ENCODE measurements at regions of chr21 and their contacts with region 1.

Region 1: GRCh38 chr21:38355992-38356797 is 99.4 kb downstream of the KCNJ15 start:
- DNase-seq: peak; percentile 88
- ATAC-seq: peak; percentile 78
- H3K4me3 Mint-ChIP-seq: no peak overlapping the region
- H3K27ac Mint-ChIP-seq: no peak overlapping the region
- H3K4me1 Mint-ChIP-seq: peaks cover 13% of the 10 kb centered on the region
- H3K27me3 Mint-ChIP-seq: peaks cover 5% of the 10 kb centered on the region

Region 2: GRCh38 chr21:37675202-37675801 is 680.9 kb before region 1 on chr21:
- CTCF ChIA-PET with region 1: interaction called, 4 read pairs
- POLR2A ChIA-PET with region 1: no interaction called
- intact Hi-C with region 1: loop called in 1 of 2 experiments (anchors 10 kb)
- DNase-seq: peak; percentile 81
- ATAC-seq: peak; percentile 74
- H3K4me3 Mint-ChIP-seq: no peak overlapping the region
- H3K27ac Mint-ChIP-seq: no peak overlapping the region
- H3K4me1 Mint-ChIP-seq: no peaks in the 10 kb centered on the region
- H3K27me3 Mint-ChIP-seq: peaks cover 18% of the 10 kb centered on the region

Region 3: DNA sequence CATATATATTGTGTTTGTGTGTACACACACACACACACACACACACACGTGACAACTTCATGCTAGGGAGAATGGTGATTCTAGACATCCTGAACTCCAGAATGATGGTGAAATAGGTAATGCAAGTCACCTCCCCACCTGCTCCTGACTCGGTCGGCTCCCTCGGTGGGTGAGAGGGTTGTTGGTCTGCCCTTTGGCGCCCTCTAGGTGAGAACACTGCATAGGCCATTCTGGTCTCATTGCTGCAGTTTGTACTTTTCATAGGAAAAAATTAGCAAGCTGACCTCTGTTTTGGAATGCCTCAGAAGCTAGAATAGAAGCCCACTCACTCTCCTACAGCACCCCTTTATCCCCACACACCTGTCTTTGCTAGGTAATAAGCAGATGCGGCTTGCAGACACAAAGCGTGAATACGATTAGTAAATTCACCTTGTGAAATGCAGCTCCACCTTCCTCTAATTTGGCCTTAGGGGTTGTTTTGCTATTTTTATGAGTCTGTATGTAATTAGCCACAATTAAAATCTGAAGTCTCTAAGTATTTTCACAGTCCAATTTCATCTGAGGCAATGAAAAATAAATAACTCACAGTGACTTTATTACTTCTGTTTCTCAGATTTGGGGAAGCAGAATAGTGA is 229.4 kb before region 1 on chr21:
- CTCF ChIA-PET with region 1: interaction called, 10 read pairs
- POLR2A ChIA-PET with region 1: no interaction called
- intact Hi-C with region 1: no loop called
- DNase-seq: peak; percentile 80
- ATAC-seq: peak; percentile 76
- H3K4me3 Mint-ChIP-seq: no peak overlapping the region
- H3K27ac Mint-ChIP-seq: no peak overlapping the region
- H3K4me1 Mint-ChIP-seq: no peaks in the 10 kb centered on the region
- H3K27me3 Mint-ChIP-seq: peaks cover 11% of the 10 kb centered on the region

Region 4: GRCh38 chr21:38170280-38170679 is 185.9 kb before region 1 on chr21:
- CTCF ChIA-PET with region 1: interaction called, 81 read pairs
- POLR2A ChIA-PET with region 1: no interaction called
- intact Hi-C with region 1: no loop called
- DNase-seq: peak; percentile 37
- ATAC-seq: no peak
- H3K4me3 Mint-ChIP-seq: no peak overlapping the region
- H3K27ac Mint-ChIP-seq: no peak overlapping the region
- H3K4me1 Mint-ChIP-seq: no peaks in the 10 kb centered on the region
- H3K27me3 Mint-ChIP-seq: no peaks in the 10 kb centered on the region

Region 5: GRCh38 chr21:38212706-38213105 is 143.5 kb before region 1 on chr21:
- CTCF ChIA-PET with region 1: interaction called, 154 read pairs
- POLR2A ChIA-PET with region 1: no interaction called
- intact Hi-C with region 1: no loop called
- DNase-seq: no peak
- ATAC-seq: no peak
- H3K4me3 Mint-ChIP-seq: no peak overlapping the region
- H3K27ac Mint-ChIP-seq: no peak overlapping the region
- H3K4me1 Mint-ChIP-seq: peaks cover 3% of the 10 kb centered on the region
- H3K27me3 Mint-ChIP-seq: peaks cover 26% of the 10 kb centered on the region

Region 6: GRCh38 chr21:38236232-38236631 is 120.0 kb before region 1 on chr21:
- CTCF ChIA-PET with region 1: interaction called, 18 read pairs
- POLR2A ChIA-PET with region 1: no interaction called
- intact Hi-C with region 1: no loop called
- DNase-seq: no peak
- ATAC-seq: no peak
- H3K4me3 Mint-ChIP-seq: no peak overlapping the region
- H3K27ac Mint-ChIP-seq: no peak overlapping the region
- H3K4me1 Mint-ChIP-seq: peaks cover 2% of the 10 kb centered on the region
- H3K27me3 Mint-ChIP-seq: no peaks in the 10 kb centered on the region

Region 7: GRCh38 chr21:38343693-38344092 is 12.5 kb before region 1 on chr21:
- CTCF ChIA-PET with region 1: interaction called, 13 read pairs
- POLR2A ChIA-PET with region 1: no interaction called
- intact Hi-C with region 1: no loop called
- DNase-seq: no peak
- ATAC-seq: no peak
- H3K4me3 Mint-ChIP-seq: no peak overlapping the region
- H3K27ac Mint-ChIP-seq: no peak overlapping the region
- H3K4me1 Mint-ChIP-seq: peaks cover 10% of the 10 kb centered on the region
- H3K27me3 Mint-ChIP-seq: peaks cover 3% of the 10 kb centered on the region